CD4-positive, alpha-beta memory T cell (primary cell): ENCODE measurements at regions of chr19 and their contacts with region 1.

Region 1: GRCh38 chr19:42325273-42325895 is at the start of gene MEGF8:
- DNase-seq: peak; percentile 97 to 99 (median 99)
- H3K4me3 ChIP-seq: peak within 1 kb of the TSS; percentile 66 to 90
- H3K4me3 Mint-ChIP-seq: peak within 1 kb of the TSS; percentile 89 to 95 (median 92)
- H3K27ac ChIP-seq: peak within 1 kb of the TSS; percentile 81
- H3K27ac Mint-ChIP-seq: peak within 1 kb of the TSS; percentile 85 to 91 (median 90)
- H3K4me1 ChIP-seq: peaks cover 19% of the 10 kb centered on the region
- H3K4me1 Mint-ChIP-seq: peaks cover 7 to 31% (median 20%) of the 10 kb centered on the region in 4 donors
- H3K27me3 ChIP-seq: no peaks in the 10 kb centered on the region
- H3K27me3 Mint-ChIP-seq: peaks cover 5 to 12% of the 10 kb centered on the region in 2 donors
- total RNA-seq, gene MEGF8: 8.6 to 9.5 TPM

Region 2: DNA sequence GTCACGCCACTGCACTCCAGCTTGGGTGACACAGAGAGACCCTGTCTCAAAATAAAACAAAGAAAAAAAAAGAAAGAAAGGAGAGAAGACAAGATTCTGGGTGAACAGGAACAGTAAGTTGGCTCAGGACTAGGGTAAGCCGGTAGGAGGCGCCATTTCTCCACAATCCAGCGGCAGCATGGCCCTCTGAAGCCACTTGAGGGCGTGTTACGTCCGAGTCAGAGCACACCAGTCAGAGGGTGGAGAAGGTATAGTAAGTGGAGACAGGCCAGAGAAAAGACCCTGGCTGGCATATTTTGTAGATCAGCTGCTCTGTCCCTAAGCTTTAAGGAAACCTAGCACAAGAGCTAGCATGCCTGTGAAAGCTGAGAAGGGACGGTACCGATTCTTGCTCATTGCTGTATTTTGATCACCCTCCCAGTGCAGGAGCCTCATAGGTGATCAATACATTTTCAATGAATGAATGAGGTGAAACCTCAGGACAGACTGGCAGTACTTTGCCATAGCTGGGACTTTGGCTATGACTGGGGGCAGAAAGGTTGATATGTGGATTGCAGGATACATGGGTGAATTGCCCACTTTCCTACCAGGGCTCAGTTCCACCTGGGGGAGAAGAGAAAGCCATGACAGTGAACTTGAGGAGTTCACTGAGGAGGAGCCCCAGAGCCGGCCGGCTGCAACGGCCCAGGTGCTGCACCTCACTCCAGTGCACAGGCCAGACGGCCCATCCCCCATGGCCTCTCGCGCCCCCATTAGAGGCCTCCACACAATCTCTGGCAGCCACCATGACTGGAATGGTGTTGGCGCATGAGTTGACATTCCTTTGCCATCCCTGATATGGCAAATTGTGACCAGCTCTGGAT is 216.6 kb before region 1 on chr19:
- CTCF ChIA-PET with region 1: interaction called, 23 read pairs
- POLR2A ChIA-PET with region 1: no interaction called
- intact Hi-C with region 1: loop called (anchors 1 kb)
- DNase-seq: peak; percentile 83 to 86 (median 85)
- H3K4me3 ChIP-seq: no peak overlapping the region
- H3K4me3 Mint-ChIP-seq: no peak overlapping the region
- H3K27ac ChIP-seq: no peak overlapping the region
- H3K27ac Mint-ChIP-seq: peak overlapping the region; percentile 38 to 87 (median 65)
- H3K4me1 ChIP-seq: peaks cover 6% of the 10 kb centered on the region
- H3K4me1 Mint-ChIP-seq: peaks cover 5 to 11% (median 9%) of the 10 kb centered on the region in 4 donors
- H3K27me3 ChIP-seq: no peaks in the 10 kb centered on the region
- H3K27me3 Mint-ChIP-seq: no peaks in the 10 kb centered on the region

Region 3: DNA sequence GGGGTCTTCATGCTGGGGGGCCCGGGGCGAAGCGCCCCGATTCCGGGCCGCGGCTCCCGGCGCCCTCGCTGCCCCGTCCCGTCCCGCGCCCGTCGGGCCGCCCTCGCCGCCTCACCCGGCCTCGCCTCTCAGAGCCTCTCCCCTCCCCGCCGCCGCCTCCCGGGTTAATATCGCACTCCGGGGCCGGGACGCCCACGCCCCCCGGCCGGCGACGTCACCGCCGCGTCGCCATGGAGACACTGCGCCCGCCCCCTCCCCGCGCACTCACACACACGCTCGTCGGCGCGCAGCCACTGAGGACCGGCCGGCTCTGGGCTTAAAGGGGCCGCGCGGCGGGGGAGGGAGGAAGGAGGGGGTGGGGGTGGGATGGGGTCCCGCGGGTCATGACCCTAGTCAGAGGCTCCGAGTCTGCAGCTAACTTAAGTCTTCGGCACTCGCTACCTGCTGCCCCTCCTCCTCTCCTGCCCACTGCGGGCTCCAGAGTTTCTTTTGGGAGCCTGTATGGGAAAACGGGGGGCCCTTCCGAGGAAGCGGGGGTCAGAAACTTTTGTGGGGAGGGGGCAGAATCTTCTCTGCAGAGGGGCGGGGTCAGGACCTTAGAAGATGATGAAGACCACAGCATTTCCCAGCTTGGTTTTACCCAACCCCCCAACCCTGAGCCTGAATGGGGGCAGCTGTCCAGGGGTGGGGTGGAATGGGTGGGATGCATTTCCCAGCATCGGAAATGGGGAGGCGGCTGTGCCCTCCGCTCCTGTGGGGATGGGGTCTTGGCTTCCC is 70.2 kb before region 1 on chr19 and contains the start of gene ERF:
- CTCF ChIA-PET with region 1: no interaction called
- POLR2A ChIA-PET with region 1: no interaction called
- intact Hi-C with region 1: loop called (anchors 1 kb)
- DNase-seq: peak; percentile 92 to 95 (median 94)
- H3K4me3 ChIP-seq: peak within 1 kb of the TSS; percentile 69 to 90
- H3K4me3 Mint-ChIP-seq: peak within 1 kb of the TSS; percentile 76 to 88 (median 82)
- H3K27ac ChIP-seq: peak within 1 kb of the TSS; percentile 93
- H3K27ac Mint-ChIP-seq: peak within 1 kb of the TSS; percentile 81 to 88 (median 86)
- H3K4me1 ChIP-seq: peaks cover 35% of the 10 kb centered on the region
- H3K4me1 Mint-ChIP-seq: peaks cover 12 to 40% (median 27%) of the 10 kb centered on the region in 4 donors
- H3K27me3 ChIP-seq: no peaks in the 10 kb centered on the region
- H3K27me3 Mint-ChIP-seq: peaks cover 3 to 4% of the 10 kb centered on the region in 2 donors
- total RNA-seq, gene ERF: 38.5 to 39.9 TPM

Region 4: DNA sequence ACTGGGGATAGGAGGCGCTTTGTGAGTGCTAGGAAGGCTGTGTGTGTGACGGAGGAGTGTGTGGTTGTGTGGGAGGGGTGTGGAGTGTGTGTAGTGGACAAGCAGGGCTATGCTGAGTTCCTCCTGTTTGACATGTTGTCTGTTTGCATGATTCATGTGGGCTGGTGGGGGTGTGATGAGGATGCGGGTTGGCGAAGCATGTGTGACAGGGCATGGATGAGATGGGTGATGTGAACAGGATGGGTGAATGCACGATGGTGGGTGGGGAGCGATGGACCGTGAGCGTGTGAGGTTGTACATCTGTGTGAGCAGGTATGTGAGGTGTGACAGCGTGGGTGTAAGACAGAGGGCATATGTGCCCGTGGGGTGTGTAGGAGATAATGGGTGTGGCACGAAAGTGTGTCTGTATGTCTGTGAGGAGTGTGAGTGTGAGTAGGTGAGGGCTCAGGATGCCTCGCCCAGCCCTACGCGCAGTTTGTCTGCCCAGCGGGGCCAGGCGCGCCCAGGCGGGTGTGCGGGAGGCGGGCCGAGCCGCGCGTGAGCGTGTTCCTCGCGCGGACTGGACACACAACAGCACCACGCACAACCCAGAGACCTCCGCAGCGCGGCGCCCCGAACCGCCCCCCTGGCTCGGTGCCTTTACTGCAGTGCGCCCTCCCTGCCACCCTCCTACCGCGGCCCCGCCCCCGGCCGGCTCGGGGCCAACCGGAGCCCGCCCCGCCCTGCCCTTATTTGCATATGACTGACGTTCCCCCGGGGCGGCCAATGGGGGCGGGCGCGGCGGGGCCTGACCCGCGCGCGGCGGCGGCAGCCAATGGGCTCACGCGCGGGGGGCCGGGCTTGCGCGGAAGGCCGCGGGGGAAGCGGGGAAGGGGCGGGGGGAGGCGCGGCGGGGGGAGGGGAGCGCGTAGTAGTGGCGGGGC is 42.0 kb before region 1 on chr19:
- CTCF ChIA-PET with region 1: no interaction called
- POLR2A ChIA-PET with region 1: no interaction called
- intact Hi-C with region 1: loop called (anchors 1 kb)
- DNase-seq: peak; percentile 96 to 98 (median 97)
- H3K4me3 ChIP-seq: peak overlapping the region; percentile 1 to 60
- H3K4me3 Mint-ChIP-seq: no peak overlapping the region
- H3K27ac ChIP-seq: peak overlapping the region; percentile 77
- H3K27ac Mint-ChIP-seq: no peak overlapping the region
- H3K4me1 ChIP-seq: peaks cover 54% of the 10 kb centered on the region
- H3K4me1 Mint-ChIP-seq: peaks cover 32 to 37% (median 33%) of the 10 kb centered on the region in 4 donors
- H3K27me3 ChIP-seq: no peaks in the 10 kb centered on the region
- H3K27me3 Mint-ChIP-seq: no peaks in the 10 kb centered on the region

Region 5: GRCh38 chr19:42301656-42302203 is 23.7 kb before region 1 on chr19 and contains the start of gene PRR19:
- CTCF ChIA-PET with region 1: interaction called, 10 read pairs
- POLR2A ChIA-PET with region 1: no interaction called
- intact Hi-C with region 1: loop called (anchors 1 kb)
- DNase-seq: no peak
- H3K4me3 ChIP-seq: peak within 1 kb of the TSS; percentile 52 to 66
- H3K4me3 Mint-ChIP-seq: peak within 1 kb of the TSS; percentile 85 to 93 (median 90)
- H3K27ac ChIP-seq: peak within 1 kb of the TSS; percentile 63
- H3K27ac Mint-ChIP-seq: peak within 1 kb of the TSS; percentile 81 to 94 (median 89)
- H3K4me1 ChIP-seq: peaks cover 20% of the 10 kb centered on the region
- H3K4me1 Mint-ChIP-seq: peaks cover 16 to 33% (median 22%) of the 10 kb centered on the region in 4 donors
- H3K27me3 ChIP-seq: no peaks in the 10 kb centered on the region
- H3K27me3 Mint-ChIP-seq: no peaks in the 10 kb centered on the region
- total RNA-seq, gene PRR19: 0.28 to 0.64 TPM

Region 6: GRCh38 chr19:42423462-42424344 is 98.3 kb after region 1 on chr19:
- CTCF ChIA-PET with region 1: no interaction called
- POLR2A ChIA-PET with region 1: interaction called, 3 read pairs
- intact Hi-C with region 1: loop called (anchors 2 kb)
- DNase-seq: peak; percentile 93 to 95 (median 94)
- H3K4me3 ChIP-seq: peak overlapping the region; percentile 86 to 97
- H3K4me3 Mint-ChIP-seq: peak overlapping the region; percentile 91 to 99 (median 98)
- H3K27ac ChIP-seq: peak overlapping the region; percentile 61
- H3K27ac Mint-ChIP-seq: peak overlapping the region; percentile 88 to 98 (median 95)
- H3K4me1 ChIP-seq: peaks cover 39% of the 10 kb centered on the region
- H3K4me1 Mint-ChIP-seq: peaks cover 28 to 48% (median 37%) of the 10 kb centered on the region in 4 donors
- H3K27me3 ChIP-seq: no peaks in the 10 kb centered on the region
- H3K27me3 Mint-ChIP-seq: no peaks in the 10 kb centered on the region